ENCODE measurements at regions of chr3 and their contacts with region 1.

Region 1: GRCh38 chr3:132006605-132007204 is 28.1 kb downstream of the CPNE4 start:
- DNase-seq: peak; percentile 50
- H3K4me3 ChIP-seq: no peak overlapping the region
- H3K27ac ChIP-seq: no peak overlapping the region
- H3K4me1 ChIP-seq: no peaks in the 10 kb centered on the region
- H3K27me3 ChIP-seq: peaks cover 5 to 8% of the 10 kb centered on the region in 2 experiments
- CTCF ChIP-seq: peak; percentile 58 to 65
- POLR2A ChIP-seq: no peak

Region 2: DNA sequence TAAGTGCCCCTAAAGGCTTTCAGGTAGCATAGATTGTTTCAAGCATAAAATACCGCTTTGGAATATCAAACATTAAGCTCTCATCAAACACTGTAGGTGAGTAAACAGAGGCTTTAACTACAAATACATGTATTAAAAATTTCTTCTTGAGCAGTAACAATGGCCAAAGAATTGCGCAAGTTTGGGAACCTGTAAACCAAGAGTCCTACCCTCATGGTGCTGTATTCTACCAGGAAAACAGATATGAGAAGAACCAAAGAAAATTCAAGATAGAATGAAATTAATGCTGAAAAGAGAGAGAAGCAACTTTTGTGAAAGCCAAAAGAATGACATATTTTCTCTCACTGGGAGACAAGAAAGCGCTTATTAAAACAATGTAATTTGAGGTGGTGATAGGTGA is 17.4 kb before region 1 on chr3:
- CTCF ChIA-PET with region 1: no interaction called
- POLR2A ChIA-PET with region 1: no interaction called
- dilution Hi-C with region 1: no loop called
- intact Hi-C with region 1: no loop called
- DNase-seq: no peak
- H3K4me3 ChIP-seq: no peak overlapping the region
- H3K27ac ChIP-seq: no peak overlapping the region
- H3K4me1 ChIP-seq: no peaks in the 10 kb centered on the region
- H3K27me3 ChIP-seq: no peaks in the 10 kb centered on the region
- CTCF ChIP-seq: no peak
- POLR2A ChIP-seq: no peak

Region 3: DNA sequence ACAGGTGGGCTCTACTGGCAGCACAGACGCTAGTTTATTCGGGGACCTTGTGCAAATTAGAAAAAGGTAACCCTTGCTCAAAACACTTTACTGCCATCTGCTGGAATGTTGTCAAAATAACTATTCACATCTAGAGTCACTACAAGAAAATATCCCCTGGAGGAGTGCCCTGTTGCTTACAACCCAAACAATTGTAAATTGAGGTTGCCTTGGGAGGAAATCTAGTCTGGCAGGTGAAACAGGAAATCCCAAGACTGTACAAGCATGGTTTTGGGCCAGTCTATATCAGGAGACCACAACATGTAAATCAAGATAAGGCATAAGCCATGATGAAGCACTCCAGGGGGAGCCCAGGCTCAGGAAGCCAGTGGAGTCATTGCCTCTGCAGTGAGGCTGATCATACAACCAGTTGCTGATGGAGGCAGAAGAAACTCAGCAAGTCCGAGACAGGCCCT is 173.7 kb after region 1 on chr3:
- CTCF ChIA-PET with region 1: interaction called, 3 read pairs
- POLR2A ChIA-PET with region 1: no interaction called
- dilution Hi-C with region 1: no loop called
- intact Hi-C with region 1: loop called (anchors 1 kb)
- DNase-seq: peak; percentile 62
- H3K4me3 ChIP-seq: no peak overlapping the region
- H3K27ac ChIP-seq: no peak overlapping the region
- H3K4me1 ChIP-seq: no peaks in the 10 kb centered on the region
- H3K27me3 ChIP-seq: peaks cover 9 to 22% of the 10 kb centered on the region in 2 experiments
- CTCF ChIP-seq: peak; percentile 37 to 42
- POLR2A ChIP-seq: no peak

Region 4: DNA sequence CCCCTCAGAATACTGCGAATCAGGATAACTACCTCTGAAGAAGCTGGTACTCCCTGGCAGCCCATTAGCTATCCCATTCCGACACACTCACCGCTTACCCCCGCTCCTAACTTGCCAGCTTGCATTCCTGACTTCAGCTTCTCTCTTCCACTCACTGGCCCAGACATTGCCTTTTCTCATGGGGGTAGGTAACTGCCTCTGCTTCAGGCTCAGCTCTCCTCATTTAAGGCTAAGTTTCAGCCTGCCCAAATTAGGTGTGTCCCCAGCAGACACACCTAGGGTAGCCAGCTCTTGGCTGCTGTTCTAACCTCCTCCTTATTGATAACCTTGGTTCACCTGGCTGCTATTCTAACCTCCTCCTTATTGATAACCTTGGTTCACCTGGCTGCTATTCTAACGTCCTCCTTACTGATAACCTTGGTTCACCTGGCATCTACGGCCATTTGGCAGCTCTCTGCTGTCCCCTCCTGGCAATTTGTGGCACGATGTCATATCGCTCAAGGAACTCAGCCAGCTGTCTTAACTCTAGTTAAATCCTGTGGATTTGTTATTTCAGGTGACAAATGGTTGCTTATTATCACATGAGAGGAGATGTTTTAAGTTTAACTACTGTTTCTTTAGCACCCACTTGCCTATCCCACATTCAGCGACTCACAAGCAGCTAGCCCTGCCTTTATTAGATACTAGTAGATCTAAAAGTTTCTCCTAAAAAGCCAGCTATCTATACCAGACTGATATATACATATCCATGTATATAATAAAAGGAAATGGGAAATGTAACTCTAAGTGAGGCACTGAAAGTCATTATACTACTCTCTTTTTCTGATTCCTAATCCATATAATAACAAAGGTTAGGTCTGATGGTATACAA is 204.0 kb after region 1 on chr3:
- CTCF ChIA-PET with region 1: interaction called, 3 read pairs
- POLR2A ChIA-PET with region 1: no interaction called
- dilution Hi-C with region 1: no loop called
- intact Hi-C with region 1: loop called (anchors 1 kb)
- DNase-seq: peak; percentile 9
- H3K4me3 ChIP-seq: no peak overlapping the region
- H3K27ac ChIP-seq: no peak overlapping the region
- H3K4me1 ChIP-seq: no peaks in the 10 kb centered on the region
- H3K27me3 ChIP-seq: peaks cover 4 to 8% of the 10 kb centered on the region in 2 experiments
- CTCF ChIP-seq: peak; percentile 50 to 53
- POLR2A ChIP-seq: no peak

Measured in endothelial cell of umbilical vein (primary cell).